Thyroid gland (tissue), 4 donors: ENCODE measurements at regions of chr7 and their contacts with region 1.

Region 1: GRCh38 chr7:74587435-74588126 is 69.9 kb upstream of the GTF2I start:
- DNase-seq: peak; percentile 99
- H3K4me3 ChIP-seq: no peak overlapping the region
- H3K27ac ChIP-seq: peak overlapping the region; percentile 89 to 95 (median 91)
- H3K4me1 ChIP-seq: peaks cover 35 to 43% of the 10 kb centered on the region in 2 donors
- H3K27me3 ChIP-seq: no peaks in the 10 kb centered on the region
- CTCF ChIP-seq: peak in 2 of 6 experiments; percentile 6 to 31
- POLR2A ChIP-seq: peak in 1 of 2 donors; percentile 12

Region 2: GRCh38 chr7:74535951-74536356 is 51.6 kb before region 1 on chr7:
- intact Hi-C with region 1: no loop called
- DNase-seq: no peak
- H3K4me3 ChIP-seq: no peak overlapping the region
- H3K27ac ChIP-seq: peak overlapping the region; percentile 41 to 73 (median 63)
- H3K4me1 ChIP-seq: peaks cover 10 to 11% of the 10 kb centered on the region in 2 donors
- H3K27me3 ChIP-seq: no peaks in the 10 kb centered on the region
- CTCF ChIP-seq: no peak
- POLR2A ChIP-seq: no peak

Region 3: GRCh38 chr7:74623135-74623534 is 35.6 kb after region 1 on chr7:
- intact Hi-C with region 1: loop called (anchors 5 kb)
- DNase-seq: no peak
- H3K4me3 ChIP-seq: no peak overlapping the region
- H3K27ac ChIP-seq: peak overlapping the region in 2 of 3 donors; percentile 49 to 64
- H3K4me1 ChIP-seq: peaks cover 25 to 30% of the 10 kb centered on the region in 2 donors
- H3K27me3 ChIP-seq: no peaks in the 10 kb centered on the region
- CTCF ChIP-seq: no peak
- POLR2A ChIP-seq: no peak